ENCODE measurements at regions of chr18 and their contacts with region 1.

Region 1: DNA sequence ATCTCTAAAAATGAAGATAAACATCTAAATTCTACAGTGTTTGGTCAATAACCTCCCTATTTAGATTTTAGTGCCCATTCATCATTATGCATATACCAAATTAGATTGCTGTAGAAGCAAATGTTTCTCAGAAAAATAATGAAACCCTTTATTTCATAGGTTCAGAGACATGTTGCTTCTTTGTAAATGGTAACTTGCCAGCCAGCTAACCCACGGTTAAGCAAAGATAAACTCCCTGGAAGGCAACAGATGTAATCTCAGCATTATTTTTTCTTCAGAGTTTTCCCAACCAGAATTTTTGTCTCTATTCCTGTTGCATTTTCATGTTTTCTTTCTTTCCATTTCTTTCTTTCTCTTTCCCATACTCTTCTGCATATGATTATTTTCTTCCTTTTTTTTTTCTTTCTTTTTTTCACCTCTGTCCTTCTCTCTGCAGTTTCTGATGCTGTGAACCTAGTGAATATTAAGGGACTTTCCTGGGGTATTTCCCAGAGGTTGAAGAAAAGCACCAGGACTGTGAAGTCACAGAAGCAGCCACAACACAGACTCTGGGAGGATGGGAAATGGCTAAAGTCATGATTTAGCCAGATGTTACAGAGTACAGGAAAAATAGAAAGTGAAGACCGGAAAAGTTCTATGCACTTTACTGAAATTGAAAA is 50.0 kb upstream of the DSG1 start:
- DNase-seq: no peak
- ATAC-seq: no peak
- H3K4me3 ChIP-seq: no peak overlapping the region
- H3K27ac ChIP-seq: no peak overlapping the region
- H3K4me1 ChIP-seq: peaks cover 0 to 19% (median 12%) of the 10 kb centered on the region in 9 donors
- H3K27me3 ChIP-seq: no peaks in the 10 kb centered on the region
- CTCF ChIP-seq: no peak

Region 2: DNA sequence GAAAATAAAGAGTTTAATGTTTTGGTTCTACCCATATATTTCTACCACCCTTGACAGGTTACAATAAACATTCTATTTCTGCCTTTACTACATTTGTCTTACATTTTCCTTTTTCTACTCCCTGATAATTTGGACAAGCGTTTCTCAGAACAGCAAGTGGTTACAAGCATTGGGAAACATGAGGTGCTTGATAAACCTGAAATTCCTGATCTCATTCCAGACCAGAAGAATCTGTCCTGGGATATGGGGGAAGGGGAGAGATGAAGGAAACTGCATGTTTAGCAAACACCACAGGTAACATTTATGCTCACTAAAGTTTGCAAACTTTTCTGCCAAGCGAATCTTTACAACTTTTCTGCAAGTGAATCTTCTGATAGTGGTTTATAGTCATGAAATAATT is 77.0 kb before region 1 on chr18:
- intact Hi-C with region 1: no loop called
- DNase-seq: no peak
- ATAC-seq: no peak
- H3K4me3 ChIP-seq: no peak overlapping the region
- H3K27ac ChIP-seq: no peak overlapping the region
- H3K4me1 ChIP-seq: no peaks in the 10 kb centered on the region
- H3K27me3 ChIP-seq: no peaks in the 10 kb centered on the region
- CTCF ChIP-seq: no peak

Region 3: GRCh38 chr18:31206787-31207381 is 61.1 kb before region 1 on chr18:
- intact Hi-C with region 1: loop called in 1 of 10 experiments (anchors 10 kb)
- DNase-seq: peak; percentile 39 to 40
- ATAC-seq: peak; percentile 66 to 87 (median 80)
- H3K4me3 ChIP-seq: peak overlapping the region in 4 of 10 donors; percentile 1 to 18 (median 8)
- H3K27ac ChIP-seq: peak overlapping the region in 1 of 10 donors; percentile 39
- H3K4me1 ChIP-seq: peaks cover 0 to 45% (median 5%) of the 10 kb centered on the region in 9 donors
- H3K27me3 ChIP-seq: no peaks in the 10 kb centered on the region
- CTCF ChIP-seq: peak in 1 of 9 donors; percentile 12